A549 (cell line): ENCODE measurements at regions of chr10 and their contacts with region 1.

Region 1: DNA sequence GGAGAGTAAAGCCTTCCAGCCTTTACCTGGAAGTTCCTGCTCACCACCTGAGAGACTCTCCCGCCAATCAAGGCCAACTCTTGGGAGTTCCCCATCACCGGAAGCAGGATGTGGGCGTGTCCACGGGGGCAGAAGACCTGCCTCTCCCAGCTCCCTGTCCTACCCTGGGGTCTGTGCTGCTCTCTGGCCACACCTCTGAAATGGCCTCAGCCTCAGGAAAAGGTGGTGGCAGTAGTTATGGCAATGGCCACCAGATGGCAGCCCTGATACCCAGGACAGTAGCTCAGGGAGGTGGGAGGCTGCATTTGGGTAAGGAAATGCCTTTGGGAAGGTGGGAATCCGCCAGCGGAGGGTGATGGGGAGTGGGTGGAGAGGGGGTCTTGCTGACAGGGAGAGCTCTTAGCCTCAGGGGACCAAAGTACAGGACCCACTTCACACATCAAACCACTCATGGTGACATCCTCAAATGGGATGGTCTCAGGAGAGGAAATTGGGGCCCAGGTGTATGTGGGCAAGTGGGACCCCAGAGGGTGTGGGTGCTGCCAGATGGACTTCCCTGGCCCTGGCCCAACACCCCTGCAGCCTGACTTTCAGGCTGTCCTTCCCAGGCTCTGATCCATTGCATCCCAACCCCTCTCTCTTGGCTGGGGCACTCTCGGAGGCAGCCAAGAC is 33.9 kb downstream of the KAZALD1 start:
- DNase-seq: peak; percentile 82 to 83
- ATAC-seq: peak; percentile 65 to 86
- H3K4me3 ChIP-seq: no peak overlapping the region
- H3K27ac ChIP-seq: peak overlapping the region in 1 of 2 experiments; percentile 4; a peak in 1 of 6 replicates
- H3K4me1 ChIP-seq: peaks cover 46% of the 10 kb centered on the region
- CTCF ChIP-seq: peak; percentile 81
- EP300 ChIP-seq: no peak
- POLR2A ChIP-seq: no peak
- RAD21 ChIP-seq: peak; percentile 55 to 63

Region 2: DNA sequence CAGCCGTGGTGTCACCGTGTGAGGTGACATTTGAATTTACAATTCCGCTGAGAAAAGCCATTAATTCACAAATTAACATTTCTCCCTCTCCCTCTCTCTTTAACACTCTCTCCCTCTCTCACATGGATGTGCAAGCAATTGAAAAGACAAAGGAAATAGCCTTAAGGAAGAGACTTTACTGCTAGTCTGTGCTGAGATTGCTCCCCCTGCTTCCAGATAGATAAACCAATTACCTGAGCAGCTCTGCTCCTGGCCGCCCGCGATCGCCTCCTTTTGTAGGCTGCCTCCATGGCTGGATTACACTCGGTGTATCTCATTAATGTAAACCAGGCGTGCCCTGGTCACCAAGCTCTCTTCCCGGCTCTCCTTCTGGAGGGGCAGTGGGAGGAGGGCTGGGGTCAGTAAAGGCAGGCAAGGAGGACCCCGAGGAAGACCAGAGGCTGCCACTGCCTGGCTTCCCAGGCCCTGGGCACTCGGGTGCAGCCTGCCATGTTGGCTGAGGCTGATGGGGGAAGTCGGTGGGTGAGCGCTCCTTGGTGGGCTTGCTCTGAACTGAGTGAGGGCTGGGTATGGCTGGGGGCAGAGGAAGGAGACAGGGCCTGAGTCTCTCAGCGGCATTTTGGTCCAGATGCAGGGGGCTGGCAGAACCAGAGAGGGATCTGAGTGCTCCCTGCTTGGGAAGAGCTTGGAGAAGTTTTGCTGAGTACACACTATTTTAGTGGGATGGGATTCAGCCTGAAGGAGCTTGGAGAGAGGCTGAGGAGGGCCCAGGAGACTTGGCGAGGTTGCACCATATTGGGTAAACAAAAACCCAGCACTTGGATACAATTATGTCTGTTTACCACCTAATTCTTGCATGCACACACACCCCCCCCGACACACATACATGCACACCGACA is 307.4 kb before region 1 on chr10:
- CTCF ChIA-PET with region 1: no interaction called
- POLR2A ChIA-PET with region 1: no interaction called
- DNase-seq: no peak
- ATAC-seq: no peak
- H3K4me3 ChIP-seq: no peak overlapping the region
- H3K27ac ChIP-seq: no peak overlapping the region
- H3K4me1 ChIP-seq: no peaks in the 10 kb centered on the region
- CTCF ChIP-seq: no peak
- EP300 ChIP-seq: no peak
- POLR2A ChIP-seq: no peak
- RAD21 ChIP-seq: no peak

Region 3: GRCh38 chr10:101075775-101076174 is 19.9 kb before region 1 on chr10:
- CTCF ChIA-PET with region 1: interaction called, 2,364 read pairs
- POLR2A ChIA-PET with region 1: no interaction called
- DNase-seq: no peak
- ATAC-seq: peak in 1 of 2 experiments; percentile 29; a peak in 3 of 6 replicates
- H3K4me3 ChIP-seq: no peak overlapping the region
- H3K27ac ChIP-seq: no peak overlapping the region
- H3K4me1 ChIP-seq: no peaks in the 10 kb centered on the region
- CTCF ChIP-seq: no peak
- EP300 ChIP-seq: no peak
- POLR2A ChIP-seq: no peak
- RAD21 ChIP-seq: no peak

Region 4: GRCh38 chr10:101080933-101081931 is 14.4 kb before region 1 on chr10:
- CTCF ChIA-PET with region 1: interaction called, 124 read pairs
- POLR2A ChIA-PET with region 1: no interaction called
- DNase-seq: no peak
- ATAC-seq: peak; percentile 23 to 41; a peak in 1 of 6 replicates
- H3K4me3 ChIP-seq: no peak overlapping the region
- H3K27ac ChIP-seq: no peak overlapping the region
- H3K4me1 ChIP-seq: no peaks in the 10 kb centered on the region
- CTCF ChIP-seq: no peak
- EP300 ChIP-seq: no peak
- POLR2A ChIP-seq: no peak
- RAD21 ChIP-seq: no peak

Region 5: DNA sequence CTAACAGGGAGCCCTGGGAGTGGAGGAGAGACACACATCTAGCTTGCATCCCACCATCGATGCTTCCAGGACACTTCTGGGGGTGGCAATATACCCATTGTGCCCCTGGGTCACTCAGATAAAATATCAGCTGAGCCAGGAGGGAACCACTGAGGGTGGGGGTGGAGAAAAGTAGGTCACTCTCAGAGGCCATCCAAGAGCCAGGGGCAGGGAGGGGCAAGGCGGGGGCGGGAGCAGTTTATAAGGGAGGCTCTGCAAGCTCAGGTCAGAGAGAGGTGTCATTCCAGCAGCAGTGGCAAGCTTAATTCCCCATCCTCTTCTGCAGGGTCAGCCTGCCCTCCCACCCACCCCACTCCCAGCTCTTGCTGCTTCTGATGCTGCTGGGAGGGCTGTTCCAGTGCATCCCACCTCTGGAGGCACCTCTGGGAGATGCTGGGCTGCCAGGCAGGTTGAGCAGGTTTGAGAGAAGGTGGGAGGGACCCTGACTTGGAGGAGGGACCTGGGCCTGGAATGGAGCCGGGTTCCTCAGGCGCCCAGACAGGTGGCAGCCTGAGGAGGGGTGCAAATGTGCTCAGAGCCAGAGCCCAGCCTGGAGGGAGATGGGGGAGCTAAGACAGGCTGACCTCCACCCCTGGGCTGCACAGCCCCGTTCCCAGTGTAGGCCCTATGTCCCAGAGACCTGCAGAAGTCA is 15.3 kb after region 1 on chr10:
- CTCF ChIA-PET with region 1: interaction called, 92 read pairs
- POLR2A ChIA-PET with region 1: no interaction called
- DNase-seq: no peak
- ATAC-seq: peak; percentile 29 to 52; a peak in 3 of 6 replicates
- H3K4me3 ChIP-seq: no peak overlapping the region
- H3K27ac ChIP-seq: no peak overlapping the region
- H3K4me1 ChIP-seq: peaks cover 10% of the 10 kb centered on the region
- CTCF ChIP-seq: no peak
- EP300 ChIP-seq: no peak
- POLR2A ChIP-seq: no peak
- RAD21 ChIP-seq: no peak

Region 6: DNA sequence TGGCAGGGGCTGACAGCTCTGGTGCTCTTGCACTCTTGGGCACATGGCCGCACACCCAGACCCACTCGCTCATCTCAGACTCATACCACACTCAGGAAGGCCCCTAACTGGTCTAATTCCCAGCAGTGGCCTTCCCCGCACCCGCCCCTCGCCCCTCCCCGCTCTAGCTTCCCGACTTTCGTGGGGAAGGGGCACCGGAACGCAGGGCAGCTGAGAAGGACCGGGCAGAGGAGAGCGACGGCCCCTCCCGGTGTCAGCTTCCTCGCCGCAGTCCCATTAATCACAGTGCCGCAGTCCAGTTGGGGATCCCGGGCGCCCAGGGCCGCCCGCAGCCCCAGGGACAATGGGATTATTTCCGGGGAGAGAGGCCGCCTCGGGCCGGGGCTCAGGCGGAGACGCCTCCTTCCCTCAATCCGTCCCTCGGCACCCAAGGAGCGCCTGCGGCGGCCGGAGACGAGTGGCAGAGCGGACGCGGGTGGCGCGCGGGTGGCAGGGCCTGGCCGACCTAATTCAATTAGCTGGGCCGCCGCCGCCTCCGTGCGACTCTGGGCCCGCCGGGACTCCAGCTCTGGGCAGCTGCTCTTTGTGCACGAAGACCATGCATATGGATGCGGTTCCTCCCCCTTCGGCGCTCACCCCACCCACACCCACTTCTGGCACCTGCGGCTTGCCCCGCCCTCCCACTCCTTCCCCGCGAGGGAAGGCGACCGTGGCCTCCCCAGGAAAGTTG is 27.6 kb after region 1 on chr10:
- CTCF ChIA-PET with region 1: interaction called, 40 read pairs
- POLR2A ChIA-PET with region 1: no interaction called
- DNase-seq: no peak
- ATAC-seq: no peak
- H3K4me3 ChIP-seq: no peak overlapping the region
- H3K27ac ChIP-seq: no peak overlapping the region
- H3K4me1 ChIP-seq: no peaks in the 10 kb centered on the region
- CTCF ChIP-seq: no peak
- EP300 ChIP-seq: no peak
- POLR2A ChIP-seq: no peak
- RAD21 ChIP-seq: no peak

Region 7: GRCh38 chr10:101155896-101156295 is 60.2 kb after region 1 on chr10:
- CTCF ChIA-PET with region 1: interaction called, 463 read pairs
- POLR2A ChIA-PET with region 1: no interaction called
- DNase-seq: no peak
- ATAC-seq: no peak
- H3K4me3 ChIP-seq: no peak overlapping the region
- H3K27ac ChIP-seq: no peak overlapping the region
- H3K4me1 ChIP-seq: 0 out of 3 replicates have a peak, but pooled peaks cover 6% of the 10 kb centered on the region
- CTCF ChIP-seq: no peak
- EP300 ChIP-seq: no peak
- POLR2A ChIP-seq: no peak
- RAD21 ChIP-seq: no peak

Region 8: DNA sequence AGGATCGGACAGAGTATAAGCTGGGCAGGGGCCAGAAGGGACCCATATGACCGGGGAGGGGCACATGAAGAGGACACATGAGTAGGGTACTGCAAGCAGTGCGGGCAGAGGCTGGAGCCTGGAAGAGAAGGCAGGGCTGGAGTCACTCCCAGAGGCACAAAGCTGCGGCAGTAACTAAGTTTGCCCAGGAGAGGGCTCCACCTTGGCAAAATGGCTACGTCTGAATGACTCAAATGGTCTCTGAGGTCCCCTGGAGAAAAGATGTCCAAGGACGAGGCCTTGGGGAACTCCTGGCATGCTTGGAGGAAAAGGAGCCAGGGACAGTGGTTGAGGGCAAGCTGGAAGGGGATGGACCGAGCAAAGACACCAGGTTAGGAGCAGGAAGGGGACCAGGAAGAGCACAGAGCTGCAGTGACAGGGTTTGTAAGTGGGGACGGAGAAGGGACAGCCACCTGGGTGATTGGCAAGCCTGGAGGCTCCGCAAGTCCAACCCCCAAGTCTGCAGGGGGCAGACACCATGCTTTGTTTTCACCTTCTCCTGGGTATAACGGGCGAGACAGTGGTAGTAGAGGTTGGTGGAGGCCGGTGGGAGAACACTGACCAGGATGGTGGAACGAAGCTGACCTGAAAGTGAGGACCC is 176.7 kb after region 1 on chr10:
- CTCF ChIA-PET with region 1: no interaction called
- POLR2A ChIA-PET with region 1: no interaction called
- DNase-seq: peak; percentile 68 to 95
- ATAC-seq: peak; percentile 88 to 97
- H3K4me3 ChIP-seq: no peak overlapping the region
- H3K27ac ChIP-seq: 0 out of 6 replicates have a peak overlapping the region, but pooled peaks of 1 of the 2 experiments have one; percentile 37
- H3K4me1 ChIP-seq: peaks cover 5% of the 10 kb centered on the region; the same call in 1 of the 3 replicates
- CTCF ChIP-seq: peak; percentile 65
- EP300 ChIP-seq: no peak
- POLR2A ChIP-seq: no peak
- RAD21 ChIP-seq: peak; percentile 50 to 55; a peak in 4 of 5 replicates